ENCODE measurements at regions of chr5 and their contacts with region 1.

Region 1: GRCh38 chr5:81751009-81751835 is at the start of gene SSBP2:
- DNase-seq: peak; percentile 99
- ATAC-seq: peak; percentile 96
- total RNA-seq, gene SSBP2: 55.4 TPM

Region 2: GRCh38 chr5:81425569-81425968 is 325.7 kb before region 1 on chr5:
- intact Hi-C with region 1: loop called (anchors 10 kb)
- DNase-seq: no peak
- ATAC-seq: no peak

Region 3: DNA sequence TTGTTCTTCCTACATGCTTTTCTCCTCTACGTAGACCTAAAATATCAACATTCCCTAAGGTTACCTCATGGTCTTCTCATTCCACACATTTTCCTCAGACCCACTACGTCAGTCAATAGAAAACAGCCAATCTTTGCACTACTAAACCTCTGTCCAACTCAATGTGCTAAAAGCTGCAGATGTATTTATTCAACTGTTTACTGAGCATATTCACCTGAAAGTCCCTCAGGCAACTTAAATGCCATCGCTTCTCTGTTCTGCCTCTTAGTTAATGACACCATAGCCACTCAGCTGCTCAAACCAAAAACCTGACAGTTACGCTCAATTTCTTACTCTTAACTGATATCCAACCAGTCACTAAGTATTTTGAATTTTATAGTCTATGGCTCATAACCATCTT is 75.4 kb before region 1 on chr5:
- intact Hi-C with region 1: no loop called
- DNase-seq: no peak
- ATAC-seq: no peak

Region 4: GRCh38 chr5:81779125-81779915 is 28.1 kb after region 1 on chr5:
- intact Hi-C with region 1: loop called (anchors 2 kb)
- DNase-seq: peak; percentile 85
- ATAC-seq: peak; percentile 80

Region 5: GRCh38 chr5:81851481-81852178 is 100.4 kb after region 1 on chr5:
- intact Hi-C with region 1: loop called (anchors 1 kb)
- DNase-seq: peak; percentile 98
- ATAC-seq: peak; percentile 93

Region 6: GRCh38 chr5:82165740-82166530 is 414.7 kb after region 1 on chr5:
- intact Hi-C with region 1: loop called (anchors 10 kb)
- DNase-seq: peak; percentile 70
- ATAC-seq: peak; percentile 100